Heart right ventricle (tissue), 16 donors: ENCODE measurements at regions of chr1 and their contacts with region 1.

Region 1: GRCh38 chr1:205485338-205486228 is 18.9 kb upstream of the CDK18 start:
- DNase-seq: peak; percentile 46 to 56
- ATAC-seq: peak; percentile 67 to 85 (median 72)
- H3K4me3 ChIP-seq: no peak overlapping the region
- H3K27ac ChIP-seq: no peak overlapping the region
- H3K4me1 ChIP-seq: peaks cover 0 to 7% (median 0%) of the 10 kb centered on the region in 9 donors
- H3K27me3 ChIP-seq: peaks cover 0 to 36% (median 28%) of the 10 kb centered on the region in 7 donors
- CTCF ChIP-seq: peak in 8 of 9 donors; percentile 95 to 99 (median 96)

Region 2: GRCh38 chr1:205111354-205111753 is 374.2 kb before region 1 on chr1:
- intact Hi-C with region 1: no loop called
- DNase-seq: no peak
- ATAC-seq: no peak
- H3K4me3 ChIP-seq: no peak overlapping the region
- H3K27ac ChIP-seq: no peak overlapping the region
- H3K4me1 ChIP-seq: peaks cover 0 to 7% (median 0%) of the 10 kb centered on the region in 9 donors
- H3K27me3 ChIP-seq: no peaks in the 10 kb centered on the region
- CTCF ChIP-seq: no peak

Region 3: DNA sequence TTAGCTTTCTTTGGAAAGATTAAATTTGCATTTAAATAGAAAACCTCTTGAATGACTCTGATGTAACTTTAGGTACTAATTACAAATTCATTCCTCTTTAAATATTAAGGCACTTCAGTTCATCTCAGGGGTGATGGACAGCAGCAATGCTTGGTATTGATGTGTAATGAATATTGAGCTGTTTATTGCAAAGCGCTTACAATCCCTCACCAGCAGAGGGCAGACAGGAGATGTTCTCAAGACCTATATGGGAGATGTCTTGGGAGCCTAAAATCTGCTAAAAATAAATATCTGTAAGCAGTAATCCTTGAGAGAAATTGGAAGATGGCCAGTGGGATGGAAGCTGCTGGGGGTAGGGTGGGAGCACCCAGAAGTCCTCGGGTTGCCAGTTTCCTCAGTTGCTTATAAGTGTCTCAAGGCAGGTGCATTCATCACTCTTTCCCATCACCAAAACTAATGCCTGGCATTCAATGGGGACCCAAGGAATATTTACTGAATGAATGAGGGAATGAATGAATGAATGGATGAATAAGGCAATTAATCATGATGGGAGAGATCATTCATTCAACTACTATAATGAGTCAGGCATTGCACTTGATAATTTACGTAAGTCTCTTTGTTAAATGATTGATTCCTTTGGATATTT is 131.2 kb before region 1 on chr1:
- intact Hi-C with region 1: loop called in 9 of 10 experiments (anchors 2 to 10 kb)
- DNase-seq: peak in 1 of 2 donors; percentile 56
- ATAC-seq: peak in 4 of 8 donors; percentile 43 to 61 (median 47)
- H3K4me3 ChIP-seq: no peak overlapping the region
- H3K27ac ChIP-seq: no peak overlapping the region
- H3K4me1 ChIP-seq: peaks cover 0 to 19% (median 0%) of the 10 kb centered on the region in 9 donors
- H3K27me3 ChIP-seq: peaks cover 7 to 27% (median 20%) of the 10 kb centered on the region in 7 donors
- CTCF ChIP-seq: peak; percentile 71 to 90 (median 83)

Region 4: DNA sequence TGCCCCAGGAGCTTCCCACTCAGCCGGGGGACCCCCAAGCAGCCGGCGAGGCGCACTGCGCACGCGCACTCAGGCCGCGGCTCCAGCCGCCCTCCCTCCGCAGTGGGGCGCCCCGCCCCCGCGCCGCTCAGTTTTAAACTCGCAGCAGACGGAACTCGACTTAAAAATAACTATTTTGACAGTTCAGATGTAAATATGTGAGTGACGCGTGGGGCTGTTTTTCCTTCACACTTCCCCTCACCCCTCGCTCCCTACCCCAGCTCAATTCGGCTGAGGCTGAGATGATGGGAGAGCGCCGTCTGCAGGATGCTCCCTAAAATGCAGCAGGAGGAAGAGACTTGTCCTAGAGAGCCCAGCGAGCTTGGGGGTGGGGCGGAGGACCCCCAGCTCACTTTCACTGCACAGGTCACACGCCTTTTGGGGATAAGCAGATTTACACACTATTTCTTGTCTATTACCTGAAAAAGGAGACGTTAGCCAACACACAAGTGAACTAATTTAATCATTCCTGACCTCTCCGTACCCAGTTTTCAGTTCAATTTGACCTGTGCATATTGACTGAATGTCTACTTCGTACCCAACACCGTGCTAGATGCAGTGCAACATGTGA is 54.8 kb before region 1 on chr1:
- intact Hi-C with region 1: loop called in 4 of 10 experiments (anchors 2 to 5 kb)
- DNase-seq: peak; percentile 51 to 60
- ATAC-seq: peak; percentile 65 to 85 (median 80)
- H3K4me3 ChIP-seq: peak overlapping the region; percentile 12 to 60 (median 53)
- H3K27ac ChIP-seq: peak overlapping the region in 2 of 10 donors; percentile 10 to 35
- H3K4me1 ChIP-seq: peaks cover 0 to 9% (median 7%) of the 10 kb centered on the region in 9 donors
- H3K27me3 ChIP-seq: peaks cover 0 to 14% (median 0%) of the 10 kb centered on the region in 7 donors
- CTCF ChIP-seq: peak; percentile 59 to 87 (median 78)

Region 5: DNA sequence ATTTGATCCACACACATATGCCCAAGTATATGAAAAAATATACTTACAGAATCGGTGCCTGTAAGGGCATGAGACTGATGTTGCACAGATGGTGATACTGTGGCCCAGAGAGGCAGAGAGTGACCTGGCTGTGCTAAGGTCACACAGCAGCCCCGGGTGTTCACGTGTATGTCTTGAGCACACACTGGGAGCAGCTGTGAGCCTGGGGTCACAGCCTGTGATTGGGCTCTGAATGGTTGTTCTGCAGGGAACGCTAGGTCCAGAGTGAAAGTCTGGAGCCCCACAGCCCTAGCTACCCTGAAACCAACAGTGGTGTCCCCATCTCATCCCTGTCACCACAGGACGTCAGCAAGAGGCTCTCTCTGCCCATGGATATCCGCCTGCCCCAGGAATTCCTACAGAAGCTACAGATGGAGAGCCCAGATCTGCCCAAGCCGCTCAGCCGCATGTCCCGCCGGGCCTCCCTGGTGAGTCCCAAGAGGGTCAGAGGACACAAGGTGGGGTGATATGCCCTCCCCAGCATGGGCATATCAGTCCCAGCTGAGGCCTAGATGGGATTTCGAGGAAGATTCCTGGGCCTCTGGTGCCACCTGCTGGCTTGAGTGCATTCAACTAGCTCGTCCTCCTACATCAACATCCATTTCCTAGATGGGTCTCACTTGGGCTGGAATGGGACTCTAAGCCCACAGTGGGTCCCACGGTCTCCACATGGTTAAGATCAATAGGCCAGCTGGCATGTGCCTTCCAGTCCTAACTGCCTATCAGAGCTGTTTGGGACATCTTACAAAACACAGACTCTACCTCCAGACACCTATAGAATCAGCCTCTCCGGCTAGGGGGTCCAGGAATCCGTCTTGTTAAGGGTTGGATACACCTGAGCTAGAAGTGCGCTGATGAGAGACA is 38.6 kb after region 1 on chr1:
- intact Hi-C with region 1: loop called (anchors 1 to 2 kb)
- DNase-seq: peak; percentile 80 to 84
- ATAC-seq: peak; percentile 35 to 71 (median 50)
- H3K4me3 ChIP-seq: no peak overlapping the region
- H3K27ac ChIP-seq: peak overlapping the region in 1 of 10 donors; percentile 55
- H3K4me1 ChIP-seq: peaks cover 21 to 85% (median 59%) of the 10 kb centered on the region in 9 donors
- H3K27me3 ChIP-seq: no peaks in the 10 kb centered on the region
- CTCF ChIP-seq: peak; percentile 56 to 88 (median 83)

Region 6: GRCh38 chr1:205563867-205564441 is 78.4 kb after region 1 on chr1:
- intact Hi-C with region 1: no loop called
- DNase-seq: no peak
- ATAC-seq: no peak
- H3K4me3 ChIP-seq: no peak overlapping the region
- H3K27ac ChIP-seq: no peak overlapping the region
- H3K4me1 ChIP-seq: peaks cover 0 to 6% (median 0%) of the 10 kb centered on the region in 9 donors
- H3K27me3 ChIP-seq: peaks cover 0 to 67% (median 20%) of the 10 kb centered on the region in 7 donors
- CTCF ChIP-seq: no peak

Region 7: DNA sequence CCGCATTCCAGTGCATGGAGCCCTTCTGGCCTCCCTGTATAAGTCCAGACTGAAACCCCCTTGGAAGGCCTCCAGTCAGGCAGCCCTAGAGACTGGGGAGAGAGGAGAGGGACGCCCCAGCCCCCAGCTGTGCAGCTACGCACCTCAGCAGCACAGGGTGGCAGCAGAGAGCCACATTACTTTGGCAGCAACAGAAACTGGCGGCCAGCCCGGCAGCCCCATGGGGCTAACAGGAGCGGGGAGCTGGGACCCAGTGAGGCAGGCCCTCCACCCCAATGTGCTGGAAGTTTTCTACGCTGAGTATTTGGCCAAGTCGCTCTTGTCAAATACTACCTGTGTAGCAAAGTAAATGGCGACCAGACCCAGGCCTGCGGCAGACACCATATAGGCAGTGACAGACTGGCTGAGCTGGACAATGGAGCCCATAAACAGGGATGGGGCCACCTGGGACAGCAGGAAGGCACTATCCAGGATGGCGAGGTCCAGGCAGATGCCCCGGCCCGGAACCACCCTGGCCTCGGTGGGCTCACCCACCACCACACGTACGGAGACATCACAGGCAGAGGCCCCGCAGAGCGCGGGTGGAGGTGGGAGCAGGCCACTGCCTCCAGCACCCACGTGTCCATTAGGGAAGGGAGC is 173.5 kb after region 1 on chr1:
- intact Hi-C with region 1: loop called in 1 of 10 experiments (anchors 5 kb)
- DNase-seq: peak; percentile 77 to 86
- ATAC-seq: peak; percentile 76 to 91 (median 86)
- H3K4me3 ChIP-seq: no peak overlapping the region
- H3K27ac ChIP-seq: no peak overlapping the region
- H3K4me1 ChIP-seq: peaks cover 0 to 18% (median 8%) of the 10 kb centered on the region in 9 donors
- H3K27me3 ChIP-seq: no peaks in the 10 kb centered on the region
- CTCF ChIP-seq: peak; percentile 72 to 97 (median 88)